CD4-positive, alpha-beta memory T cell (primary cell): ENCODE measurements at regions of chr19 and their contacts with region 1.

Region 1: DNA sequence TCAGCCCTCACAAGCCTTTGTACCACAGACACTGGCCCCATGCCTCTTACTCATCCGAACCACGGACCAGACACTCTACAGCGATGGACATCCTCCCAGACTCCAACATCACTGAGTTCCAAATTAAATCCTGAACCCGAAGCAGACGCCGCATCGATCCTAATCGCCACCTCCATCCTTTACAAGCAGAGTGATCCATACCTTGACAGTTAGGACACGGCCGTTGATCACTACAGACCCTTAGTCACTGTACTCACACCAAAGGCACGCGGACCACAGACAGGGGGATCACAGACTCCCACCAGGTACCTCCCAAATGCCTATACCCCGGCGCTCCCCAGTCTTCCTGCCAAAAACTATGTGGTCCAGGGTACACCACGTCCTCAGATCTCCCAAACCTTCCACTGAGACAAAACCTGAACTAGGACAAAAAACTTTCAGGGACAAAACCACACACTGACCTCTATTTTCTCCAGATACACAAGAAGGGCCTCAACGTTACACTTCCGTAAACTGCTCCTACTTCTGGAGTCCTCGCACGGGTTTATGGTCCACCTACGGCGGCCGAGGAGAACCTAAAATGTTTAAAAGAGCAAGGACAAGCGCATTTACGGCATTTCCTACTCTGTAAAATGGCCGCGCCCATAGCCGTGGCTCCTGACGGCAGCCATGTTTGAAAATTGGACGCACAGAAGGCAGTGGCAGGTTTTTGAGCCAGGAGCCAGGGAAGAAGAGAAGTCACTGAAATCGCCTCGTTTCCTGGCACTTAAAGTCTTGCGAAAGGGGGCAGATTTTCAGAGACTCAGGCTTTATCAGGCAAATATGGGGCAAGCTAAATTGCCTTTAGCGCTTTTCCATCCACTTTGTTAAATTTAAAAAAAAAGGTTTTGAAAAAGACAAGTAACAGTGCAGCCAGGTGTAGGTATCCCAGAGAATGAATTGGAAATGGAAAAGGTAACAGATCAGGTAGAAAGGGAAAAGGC is at the start of gene ZNF350:
- DNase-seq: peak; percentile 88 to 96 (median 89)
- H3K4me3 ChIP-seq: peak within 1 kb of the TSS; percentile 57 to 98
- H3K4me3 Mint-ChIP-seq: peak within 1 kb of the TSS; percentile 94 to 100 (median 98)
- H3K27ac ChIP-seq: peak within 1 kb of the TSS; percentile 74
- H3K27ac Mint-ChIP-seq: peak within 1 kb of the TSS; percentile 81 to 98 (median 94)
- H3K4me1 ChIP-seq: peaks cover 11% of the 10 kb centered on the region
- H3K4me1 Mint-ChIP-seq: peaks cover 9 to 32% (median 12%) of the 10 kb centered on the region in 4 donors
- H3K27me3 ChIP-seq: no peaks in the 10 kb centered on the region
- H3K27me3 Mint-ChIP-seq: no peaks in the 10 kb centered on the region
- total RNA-seq, gene ZNF350: 37.0 to 38.9 TPM

Region 2: DNA sequence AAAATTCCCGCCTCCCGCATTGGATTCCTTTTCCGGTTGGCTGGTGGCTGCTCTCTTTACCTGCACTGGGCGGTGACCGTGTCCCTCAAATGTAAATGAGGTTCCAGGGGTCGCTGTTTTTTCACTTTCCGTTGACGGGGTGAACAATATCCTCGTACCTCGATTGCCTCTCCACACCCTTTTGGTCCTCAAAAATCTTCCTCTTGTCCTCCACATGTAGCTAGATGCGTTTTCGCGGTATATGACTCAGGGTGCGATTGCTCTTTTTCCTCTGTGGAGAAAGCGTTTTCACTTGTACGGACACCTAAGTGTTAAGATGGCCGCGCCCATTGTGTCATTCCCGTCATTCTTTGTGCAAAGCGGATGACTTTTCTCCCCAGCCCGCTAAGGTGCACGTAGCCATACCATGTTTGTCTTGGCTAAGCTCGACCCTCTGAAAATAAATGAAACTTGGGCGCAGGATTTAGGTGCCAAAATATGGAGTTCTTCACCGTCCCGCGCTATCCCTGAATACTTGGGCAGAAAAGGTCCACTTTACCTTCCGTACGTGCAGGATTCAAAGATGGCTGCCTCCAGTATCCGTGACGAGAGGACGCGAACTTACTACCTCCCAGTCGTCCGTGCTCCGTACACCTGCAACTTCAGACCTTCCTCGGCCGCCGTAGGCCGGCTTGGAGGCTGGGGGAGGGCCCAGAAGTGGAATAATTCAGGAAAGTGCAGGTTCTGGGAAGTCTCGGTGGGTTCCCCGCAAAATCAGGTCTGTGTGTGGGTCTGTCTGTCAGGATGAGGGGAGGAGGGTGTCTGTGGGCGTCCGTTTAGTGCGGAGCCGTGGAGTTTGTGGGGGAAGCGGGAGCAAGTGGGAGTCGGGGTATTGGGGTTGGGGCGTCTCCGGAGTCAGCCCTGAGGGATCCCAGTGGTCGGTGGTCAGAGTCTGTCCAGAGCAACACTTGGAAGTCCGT is 59.5 kb before region 1 on chr19 and contains the start of gene ZNF613:
- CTCF ChIA-PET with region 1: no interaction called
- POLR2A ChIA-PET with region 1: interaction called, 3 read pairs
- intact Hi-C with region 1: loop called (anchors 1 kb)
- DNase-seq: peak; percentile 81 to 89 (median 85)
- H3K4me3 ChIP-seq: peak within 1 kb of the TSS; percentile 85 to 91
- H3K4me3 Mint-ChIP-seq: peak within 1 kb of the TSS; percentile 93 to 99 (median 98)
- H3K27ac ChIP-seq: peak within 1 kb of the TSS; percentile 55
- H3K27ac Mint-ChIP-seq: peak within 1 kb of the TSS; percentile 82 to 97 (median 95)
- H3K4me1 ChIP-seq: peaks cover 11% of the 10 kb centered on the region
- H3K4me1 Mint-ChIP-seq: peaks cover 16 to 38% (median 24%) of the 10 kb centered on the region in 4 donors
- H3K27me3 ChIP-seq: no peaks in the 10 kb centered on the region
- H3K27me3 Mint-ChIP-seq: peaks cover 0 to 2% of the 10 kb centered on the region in 2 donors
- total RNA-seq, gene ZNF613: 8.0 to 8.9 TPM

Region 3: GRCh38 chr19:51959791-51960190 is 26.8 kb before region 1 on chr19:
- CTCF ChIA-PET with region 1: no interaction called
- POLR2A ChIA-PET with region 1: no interaction called
- intact Hi-C with region 1: no loop called
- DNase-seq: no peak
- H3K4me3 ChIP-seq: no peak overlapping the region
- H3K4me3 Mint-ChIP-seq: no peak overlapping the region
- H3K27ac ChIP-seq: no peak overlapping the region
- H3K27ac Mint-ChIP-seq: no peak overlapping the region
- H3K4me1 ChIP-seq: no peaks in the 10 kb centered on the region
- H3K4me1 Mint-ChIP-seq: no peaks in the 10 kb centered on the region
- H3K27me3 ChIP-seq: no peaks in the 10 kb centered on the region
- H3K27me3 Mint-ChIP-seq: no peaks in the 10 kb centered on the region

Region 4: DNA sequence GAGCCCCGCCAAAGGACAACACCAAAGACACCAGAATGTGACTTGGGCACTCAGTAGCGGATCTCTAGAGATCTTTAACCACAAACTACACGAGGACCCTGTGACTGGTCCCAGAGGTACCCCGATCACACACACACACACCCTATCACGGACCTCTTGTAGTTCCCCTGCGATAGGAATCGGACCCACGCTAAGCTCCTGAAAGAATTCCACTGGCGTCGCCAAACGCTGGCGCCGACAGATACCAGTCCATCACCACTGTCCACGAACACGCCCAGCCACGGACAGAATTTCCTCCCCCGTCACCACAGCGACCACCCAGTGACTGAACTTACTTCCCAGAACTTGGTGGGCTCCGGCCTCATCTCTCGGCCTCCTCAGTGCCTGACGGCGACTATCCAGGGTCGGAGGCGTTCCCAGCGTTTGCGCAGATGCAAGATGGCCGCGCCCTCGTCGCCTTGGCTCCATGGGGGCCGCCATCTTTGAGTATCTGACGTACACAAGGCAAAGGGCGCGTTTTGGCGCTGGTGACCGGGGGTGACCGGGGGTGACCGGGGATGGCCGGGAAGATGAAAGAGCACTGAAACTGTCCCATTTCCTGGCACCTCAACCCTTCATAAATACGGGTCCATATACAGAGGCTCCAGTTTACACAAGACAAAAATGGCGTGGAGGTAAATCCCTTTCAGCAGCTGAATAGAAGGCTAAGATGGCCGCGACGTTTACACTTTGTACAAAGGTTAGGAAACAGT is 21.4 kb after region 1 on chr19 and contains the start of gene ZNF615:
- CTCF ChIA-PET with region 1: no interaction called
- POLR2A ChIA-PET with region 1: interaction called, 9 read pairs
- intact Hi-C with region 1: loop called (anchors 1 kb)
- DNase-seq: peak; percentile 83 to 92 (median 85)
- H3K4me3 ChIP-seq: peak within 1 kb of the TSS; percentile 67 to 85
- H3K4me3 Mint-ChIP-seq: peak within 1 kb of the TSS; percentile 94 to 98 (median 98)
- H3K27ac ChIP-seq: peak within 1 kb of the TSS; percentile 78
- H3K27ac Mint-ChIP-seq: peak within 1 kb of the TSS; percentile 86 to 99 (median 98)
- H3K4me1 ChIP-seq: peaks cover 8% of the 10 kb centered on the region
- H3K4me1 Mint-ChIP-seq: peaks cover 14 to 17% (median 16%) of the 10 kb centered on the region in 4 donors
- H3K27me3 ChIP-seq: no peaks in the 10 kb centered on the region
- H3K27me3 Mint-ChIP-seq: no peaks in the 10 kb centered on the region
- total RNA-seq, gene ZNF615: 21.5 to 22.4 TPM

Region 5: GRCh38 chr19:52028027-52028779 is 41.6 kb after region 1 on chr19 and contains the start of gene ZNF614:
- CTCF ChIA-PET with region 1: no interaction called
- POLR2A ChIA-PET with region 1: interaction called, 4 read pairs
- intact Hi-C with region 1: loop called (anchors 1 kb)
- DNase-seq: peak; percentile 85 to 93 (median 89)
- H3K4me3 ChIP-seq: peak within 1 kb of the TSS; percentile 77 to 96
- H3K4me3 Mint-ChIP-seq: peak within 1 kb of the TSS; percentile 90 to 99 (median 94)
- H3K27ac ChIP-seq: peak within 1 kb of the TSS; percentile 89
- H3K27ac Mint-ChIP-seq: peak within 1 kb of the TSS; percentile 91 to 99 (median 96)
- H3K4me1 ChIP-seq: peaks cover 18% of the 10 kb centered on the region
- H3K4me1 Mint-ChIP-seq: peaks cover 16 to 33% (median 23%) of the 10 kb centered on the region in 4 donors
- H3K27me3 ChIP-seq: no peaks in the 10 kb centered on the region
- H3K27me3 Mint-ChIP-seq: no peaks in the 10 kb centered on the region
- total RNA-seq, gene ZNF614: 12.3 TPM